OCI-LY7 (cell line): ENCODE measurements at regions of chr6 and their contacts with region 1.

Region 1: GRCh38 chr6:37483917-37484785 is 15.5 kb downstream of the CCDC167 start:
- DNase-seq: peak; percentile 59
- H3K4me3 ChIP-seq: no peak overlapping the region
- H3K27ac ChIP-seq: no peak overlapping the region
- H3K4me1 ChIP-seq: no peaks in the 10 kb centered on the region
- CTCF ChIP-seq: peak; percentile 80

Region 2: GRCh38 chr6:37381579-37381978 is 102.6 kb before region 1 on chr6:
- CTCF ChIA-PET with region 1: no interaction called
- POLR2A ChIA-PET with region 1: no interaction called
- intact Hi-C with region 1: loop called (anchors 5 kb)
- DNase-seq: peak; percentile 83
- H3K4me3 ChIP-seq: no peak overlapping the region
- H3K27ac ChIP-seq: no peak overlapping the region
- H3K4me1 ChIP-seq: peaks cover 2% of the 10 kb centered on the region
- CTCF ChIP-seq: peak; percentile 91

Region 3: GRCh38 chr6:37531026-37531425 is 46.9 kb after region 1 on chr6:
- CTCF ChIA-PET with region 1: no interaction called
- POLR2A ChIA-PET with region 1: no interaction called
- intact Hi-C with region 1: loop called (anchors 5 kb)
- DNase-seq: no peak
- H3K4me3 ChIP-seq: no peak overlapping the region
- H3K27ac ChIP-seq: no peak overlapping the region
- H3K4me1 ChIP-seq: no peaks in the 10 kb centered on the region
- CTCF ChIP-seq: no peak